ENCODE measurements at regions of chr12 and their contacts with region 1.

Region 1: GRCh38 chr12:118979763-118980406 is 1.5 kb upstream of the SRRM4 start:
- DNase-seq: peak in 2 of 4 donors; percentile 34 to 68
- ATAC-seq: peak; percentile 92
- H3K4me3 ChIP-seq: no peak overlapping the region
- H3K27ac ChIP-seq: no peak overlapping the region
- H3K4me1 ChIP-seq: no peaks in the 10 kb centered on the region
- H3K27me3 ChIP-seq: peaks cover 25 to 62% of the 10 kb centered on the region in 2 donors
- CTCF ChIP-seq: peak; percentile 60 to 66

Region 2: DNA sequence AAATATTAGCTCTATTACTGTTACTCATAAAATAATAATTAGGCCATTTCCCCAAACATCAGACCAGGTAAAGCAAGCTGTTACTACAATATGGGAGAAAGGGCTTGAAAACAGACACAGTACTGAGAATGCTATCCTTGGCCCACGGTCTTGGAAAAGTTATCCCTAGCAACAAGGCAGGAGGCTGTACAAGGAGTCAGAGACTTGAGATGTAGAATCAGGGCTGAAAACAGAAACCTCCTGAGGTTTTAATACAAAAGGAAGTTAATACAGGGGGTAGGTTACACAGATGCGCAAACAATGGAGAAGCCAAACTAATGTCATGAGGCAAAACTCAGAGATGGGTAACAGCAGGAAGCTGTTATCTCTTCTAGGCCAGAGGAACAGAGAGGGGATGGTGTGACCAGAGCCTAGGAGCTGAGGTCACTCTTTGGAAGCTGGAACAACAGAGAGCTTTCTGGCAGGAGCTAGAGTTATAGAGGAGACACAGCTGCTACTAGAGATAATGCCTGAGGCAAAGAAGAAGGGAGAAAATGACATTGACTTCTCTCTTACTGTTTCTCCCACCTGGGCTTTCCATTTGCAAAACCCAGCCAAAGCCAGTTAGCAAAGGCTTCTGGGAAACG is 354.7 kb before region 1 on chr12:
- intact Hi-C with region 1: no loop called
- DNase-seq: peak in 1 of 4 donors; percentile 0
- ATAC-seq: no peak
- H3K4me3 ChIP-seq: no peak overlapping the region
- H3K27ac ChIP-seq: no peak overlapping the region
- H3K4me1 ChIP-seq: no peaks in the 10 kb centered on the region
- H3K27me3 ChIP-seq: no peaks in the 10 kb centered on the region
- CTCF ChIP-seq: no peak

Region 3: DNA sequence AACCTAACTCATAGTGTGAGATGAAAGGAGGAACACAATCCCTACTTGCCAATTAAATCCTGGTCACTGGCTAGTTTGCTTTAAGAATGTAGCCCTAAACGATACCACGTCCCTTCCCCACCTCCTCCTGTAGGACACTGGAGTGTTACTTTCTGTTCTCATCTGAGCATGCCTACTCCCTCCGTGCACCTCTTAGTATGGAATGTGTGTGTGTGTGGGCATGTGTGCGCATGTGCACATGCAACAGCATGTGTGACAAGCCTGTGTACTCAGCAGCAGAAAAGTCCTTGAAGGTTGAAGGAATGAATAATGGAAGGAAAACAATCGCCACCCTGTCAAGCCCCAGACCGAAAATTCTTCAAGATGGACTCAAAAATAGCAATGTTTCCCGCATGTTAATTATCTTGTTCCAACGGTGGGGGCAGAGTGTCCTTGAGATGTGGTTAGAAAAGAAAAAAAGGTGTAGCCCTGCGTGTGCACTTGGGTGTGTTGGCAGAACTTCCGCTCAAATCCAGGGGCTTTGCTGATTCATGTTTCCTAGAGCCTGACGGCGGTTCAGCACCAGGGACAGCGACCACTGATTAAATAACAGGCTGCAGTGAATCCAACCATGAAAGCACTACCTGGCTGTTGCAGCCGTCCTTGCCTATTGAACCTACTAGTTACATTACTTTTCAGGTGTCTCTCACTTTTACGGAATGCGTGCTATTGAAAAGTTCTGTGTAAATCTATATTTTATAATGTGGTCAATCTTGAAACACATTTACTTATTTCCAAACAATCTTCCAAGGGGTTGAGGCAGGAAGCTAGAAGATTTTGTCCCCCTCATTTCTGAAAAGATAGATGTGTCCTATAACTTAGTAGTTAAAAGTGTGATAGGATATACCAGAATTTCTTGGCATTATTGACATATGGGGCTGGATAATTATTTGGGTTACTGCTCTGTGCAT is 81.2 kb after region 1 on chr12:
- intact Hi-C with region 1: no loop called
- DNase-seq: peak in 3 of 4 donors; percentile 43 to 73 (median 47)
- ATAC-seq: peak; percentile 84
- H3K4me3 ChIP-seq: no peak overlapping the region
- H3K27ac ChIP-seq: no peak overlapping the region
- H3K4me1 ChIP-seq: no peaks in the 10 kb centered on the region
- H3K27me3 ChIP-seq: no peaks in the 10 kb centered on the region
- CTCF ChIP-seq: no peak

Region 4: GRCh38 chr12:119178544-119179325 is 198.8 kb after region 1 on chr12 and contains the start of gene HSPB8:
- intact Hi-C with region 1: no loop called
- DNase-seq: peak; percentile 65 to 94 (median 90)
- ATAC-seq: peak; percentile 91
- H3K4me3 ChIP-seq: peak within 1 kb of the TSS; percentile 62 to 67
- H3K27ac ChIP-seq: peak within 1 kb of the TSS; percentile 87 to 94
- H3K4me1 ChIP-seq: peaks cover 5 to 32% of the 10 kb centered on the region in 2 donors
- H3K27me3 ChIP-seq: peaks cover 0 to 10% of the 10 kb centered on the region in 2 donors
- CTCF ChIP-seq: no peak
- polyA plus RNA-seq, gene HSPB8: 13.6 to 19.0 (median 15.6) TPM

Region 5: GRCh38 chr12:119432949-119433348 is 453.1 kb after region 1 on chr12:
- intact Hi-C with region 1: no loop called
- DNase-seq: peak in 1 of 4 donors; percentile 49
- ATAC-seq: peak; percentile 35
- H3K4me3 ChIP-seq: no peak overlapping the region
- H3K27ac ChIP-seq: no peak overlapping the region
- H3K4me1 ChIP-seq: no peaks in the 10 kb centered on the region
- H3K27me3 ChIP-seq: no peaks in the 10 kb centered on the region
- CTCF ChIP-seq: no peak

Region 6: GRCh38 chr12:119544765-119545625 is 565.1 kb after region 1 on chr12:
- intact Hi-C with region 1: loop called in 1 of 2 experiments (anchors 5 kb)
- DNase-seq: peak in 3 of 4 donors; percentile 43 to 80 (median 73)
- ATAC-seq: peak; percentile 96
- H3K4me3 ChIP-seq: no peak overlapping the region
- H3K27ac ChIP-seq: no peak overlapping the region
- H3K4me1 ChIP-seq: no peaks in the 10 kb centered on the region
- H3K27me3 ChIP-seq: no peaks in the 10 kb centered on the region
- CTCF ChIP-seq: peak; percentile 84 to 86

Measured in left lung (tissue), 14 donors.